Right ventricle myocardium inferior (tissue), 1 donor: ENCODE measurements at regions of chr4 and their contacts with region 1.

Region 1: DNA sequence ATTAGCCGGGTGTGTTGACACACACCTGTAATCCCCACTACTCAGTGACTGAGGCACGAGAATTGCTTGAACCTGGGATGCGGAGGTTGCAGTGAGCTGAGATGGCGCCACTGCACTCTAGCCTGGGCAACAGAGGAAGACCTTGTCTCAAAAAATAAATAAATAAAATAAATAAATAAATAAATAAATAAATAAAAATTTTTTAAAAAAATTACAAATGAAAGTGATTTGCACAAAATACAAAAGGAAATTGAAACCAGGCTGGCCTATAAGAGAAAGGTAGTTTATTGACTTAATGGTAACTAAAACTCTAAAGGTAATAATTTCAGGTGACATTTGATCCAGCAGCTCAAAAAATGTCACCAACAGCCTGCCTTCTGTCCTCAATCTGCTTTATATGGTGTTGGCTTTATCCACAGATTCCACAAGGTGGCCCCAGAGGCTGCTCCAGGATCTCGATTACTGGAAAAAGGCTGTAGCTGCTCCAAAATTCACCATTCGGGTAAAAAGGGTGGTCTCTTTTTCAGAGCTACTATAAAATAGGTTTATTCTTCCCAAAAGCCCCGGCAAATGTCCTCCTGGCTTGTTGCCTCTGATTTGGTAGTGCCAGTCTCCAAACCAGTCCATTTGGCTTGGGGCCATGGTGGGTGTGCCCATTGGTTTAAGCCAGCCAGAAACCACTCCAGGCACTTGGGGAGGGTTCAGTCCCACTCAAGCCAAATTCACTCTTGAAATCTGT is 61.4 kb upstream of the TRIM2 start:
- DNase-seq: peak; percentile 73
- ATAC-seq: peak; percentile 73

Region 2: DNA sequence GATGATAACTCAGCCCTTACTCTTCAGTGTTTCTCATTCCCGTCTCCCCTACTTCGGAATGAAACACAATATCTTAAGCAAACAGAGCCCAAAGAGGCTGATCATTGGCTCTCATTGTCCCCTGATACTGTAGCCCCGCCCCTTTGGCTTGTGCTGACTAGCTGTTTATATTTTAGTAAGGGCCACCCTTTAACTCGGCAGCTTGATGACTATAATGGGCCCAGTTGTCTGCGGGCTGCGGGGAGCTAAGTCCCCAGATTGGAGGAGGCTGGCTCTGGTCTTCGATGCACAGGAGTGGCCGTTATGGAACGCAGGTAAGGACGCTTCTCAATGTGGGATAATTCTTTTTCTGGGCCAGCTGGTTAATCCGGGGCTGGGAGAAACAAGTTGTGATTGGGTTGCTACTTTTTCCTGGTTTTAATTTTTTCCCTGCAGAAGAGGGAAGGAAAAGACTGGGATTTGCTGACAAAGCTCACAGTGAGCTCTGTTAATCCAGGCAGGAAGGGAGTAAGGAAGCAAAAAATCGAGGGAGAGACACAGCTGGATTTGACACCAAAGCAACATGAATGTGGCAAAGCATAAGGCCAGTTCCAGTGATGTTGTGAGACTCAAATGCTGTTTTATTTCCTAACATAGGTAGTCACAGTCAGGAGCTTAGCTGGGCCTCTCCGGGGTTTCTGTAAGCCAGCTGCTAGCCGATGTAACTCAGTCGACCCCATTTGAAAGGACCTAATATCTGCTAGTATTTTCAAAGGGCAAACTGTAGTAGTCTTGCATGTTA is 61.6 kb after region 1 on chr4 and contains the start of gene TRIM2:
- intact Hi-C with region 1: loop called (anchors 10 kb)
- DNase-seq: peak; percentile 83
- ATAC-seq: peak; percentile 91
- total RNA-seq, gene TRIM2: 14.7 TPM